Activated CD4-positive, alpha-beta T cell treated with anti-CD3 and anti-CD28 coated beads, Interleukin-2, amount 10 ng/mL, durations not matched to agents 24 days and 14 days (primary cell): ENCODE measurements at regions of chr15 and their contacts with region 1.

Region 1: GRCh38 chr15:75453703-75454470 is 2.4 kb upstream of the SIN3A start:
- DNase-seq: peak; percentile 99
- H3K4me3 Mint-ChIP-seq: peak overlapping the region; percentile 96
- H3K27ac Mint-ChIP-seq: peak overlapping the region; percentile 99
- H3K4me1 Mint-ChIP-seq: peaks cover 34% of the 10 kb centered on the region
- H3K27me3 Mint-ChIP-seq: no peaks in the 10 kb centered on the region

Region 2: GRCh38 chr15:74540761-74541493 is 913.0 kb before region 1 on chr15 and contains the start of gene ARID3B:
- intact Hi-C with region 1: loop called (anchors 2 kb)
- DNase-seq: peak; percentile 97
- H3K4me3 Mint-ChIP-seq: peak within 1 kb of the TSS; percentile 98
- H3K27ac Mint-ChIP-seq: peak within 1 kb of the TSS; percentile 95
- H3K4me1 Mint-ChIP-seq: peaks cover 44% of the 10 kb centered on the region
- H3K27me3 Mint-ChIP-seq: no peaks in the 10 kb centered on the region
- total RNA-seq, gene ARID3B: 31.1 and 33.9 TPM in 2 replicates

Region 3: GRCh38 chr15:74787251-74788041 is 666.4 kb before region 1 on chr15:
- intact Hi-C with region 1: loop called (anchors 5 kb)
- DNase-seq: peak; percentile 97
- H3K4me3 Mint-ChIP-seq: peak overlapping the region; percentile 96
- H3K27ac Mint-ChIP-seq: peak overlapping the region; percentile 99
- H3K4me1 Mint-ChIP-seq: peaks cover 68% of the 10 kb centered on the region
- H3K27me3 Mint-ChIP-seq: no peaks in the 10 kb centered on the region

Region 4: GRCh38 chr15:74906446-74907162 is 547.3 kb before region 1 on chr15 and contains the start of gene FAM219B:
- intact Hi-C with region 1: no loop called
- DNase-seq: peak; percentile 95
- H3K4me3 Mint-ChIP-seq: peak within 1 kb of the TSS; percentile 97
- H3K27ac Mint-ChIP-seq: peak within 1 kb of the TSS; percentile 93
- H3K4me1 Mint-ChIP-seq: peaks cover 35% of the 10 kb centered on the region
- H3K27me3 Mint-ChIP-seq: no peaks in the 10 kb centered on the region
- total RNA-seq, gene FAM219B: 68.0 and 82.0 TPM in 2 replicates

Region 5: DNA sequence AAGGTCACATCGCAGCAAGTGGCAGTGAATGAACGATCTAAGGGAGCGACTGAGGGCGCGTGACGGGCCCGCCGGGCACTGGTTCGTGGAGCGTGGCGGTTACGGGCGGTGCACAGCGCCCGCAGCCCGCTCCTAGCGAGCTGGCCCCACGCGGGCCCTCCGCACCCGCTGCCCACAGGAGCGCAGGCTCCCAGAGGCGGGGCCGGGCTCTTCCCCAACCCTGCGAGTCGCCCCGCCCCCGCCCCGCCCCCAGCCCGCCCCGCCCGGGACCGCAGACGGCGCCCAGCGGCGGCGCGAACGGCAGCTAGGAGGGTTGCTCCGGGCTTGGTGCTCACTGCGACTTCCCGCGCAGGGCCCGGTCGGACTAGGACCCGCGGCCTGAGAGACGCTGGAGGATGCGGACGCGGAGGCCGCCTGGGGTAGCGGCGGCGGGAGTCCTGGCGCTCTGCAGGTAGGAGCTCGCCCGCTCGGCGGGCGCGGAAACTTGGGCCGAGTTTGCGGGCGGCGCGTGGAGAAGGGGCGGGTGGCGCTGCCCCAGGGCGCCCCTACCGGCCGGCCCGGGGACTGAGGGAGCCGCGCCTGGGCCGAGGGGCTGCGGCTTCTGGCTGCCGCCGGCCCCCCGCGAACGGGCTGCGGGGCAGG is 252.2 kb before region 1 on chr15 and contains the start of gene C15orf39:
- intact Hi-C with region 1: loop called (anchors 5 kb)
- DNase-seq: peak; percentile 94
- H3K4me3 Mint-ChIP-seq: peak within 1 kb of the TSS; percentile 94
- H3K27ac Mint-ChIP-seq: peak within 1 kb of the TSS; percentile 90
- H3K4me1 Mint-ChIP-seq: peaks cover 59% of the 10 kb centered on the region
- H3K27me3 Mint-ChIP-seq: no peaks in the 10 kb centered on the region
- total RNA-seq, gene C15orf39: 43.2 and 43.9 TPM in 2 replicates

Region 6: GRCh38 chr15:75578948-75579920 is 125.3 kb after region 1 on chr15 and contains the start of gene PTPN9:
- intact Hi-C with region 1: loop called (anchors 1 kb)
- DNase-seq: peak; percentile 90
- H3K4me3 Mint-ChIP-seq: peak within 1 kb of the TSS; percentile 88
- H3K27ac Mint-ChIP-seq: peak within 1 kb of the TSS; percentile 92
- H3K4me1 Mint-ChIP-seq: peaks cover 12% of the 10 kb centered on the region
- H3K27me3 Mint-ChIP-seq: no peaks in the 10 kb centered on the region
- total RNA-seq, gene PTPN9: 21.0 and 23.6 TPM in 2 replicates

Region 7: GRCh38 chr15:75639709-75640482 is 186.0 kb after region 1 on chr15 and contains the start of gene IMP3:
- intact Hi-C with region 1: loop called (anchors 1 kb)
- DNase-seq: peak; percentile 98
- H3K4me3 Mint-ChIP-seq: peak within 1 kb of the TSS; percentile 88
- H3K27ac Mint-ChIP-seq: peak within 1 kb of the TSS; percentile 97
- H3K4me1 Mint-ChIP-seq: peaks cover 32% of the 10 kb centered on the region
- H3K27me3 Mint-ChIP-seq: peaks cover 4% of the 10 kb centered on the region
- total RNA-seq, gene IMP3: 108 and 112 TPM in 2 replicates